Sciatic nerve (tissue), 2 donors: ENCODE measurements at regions of chr22 and their contacts with region 1.

Region 1: DNA sequence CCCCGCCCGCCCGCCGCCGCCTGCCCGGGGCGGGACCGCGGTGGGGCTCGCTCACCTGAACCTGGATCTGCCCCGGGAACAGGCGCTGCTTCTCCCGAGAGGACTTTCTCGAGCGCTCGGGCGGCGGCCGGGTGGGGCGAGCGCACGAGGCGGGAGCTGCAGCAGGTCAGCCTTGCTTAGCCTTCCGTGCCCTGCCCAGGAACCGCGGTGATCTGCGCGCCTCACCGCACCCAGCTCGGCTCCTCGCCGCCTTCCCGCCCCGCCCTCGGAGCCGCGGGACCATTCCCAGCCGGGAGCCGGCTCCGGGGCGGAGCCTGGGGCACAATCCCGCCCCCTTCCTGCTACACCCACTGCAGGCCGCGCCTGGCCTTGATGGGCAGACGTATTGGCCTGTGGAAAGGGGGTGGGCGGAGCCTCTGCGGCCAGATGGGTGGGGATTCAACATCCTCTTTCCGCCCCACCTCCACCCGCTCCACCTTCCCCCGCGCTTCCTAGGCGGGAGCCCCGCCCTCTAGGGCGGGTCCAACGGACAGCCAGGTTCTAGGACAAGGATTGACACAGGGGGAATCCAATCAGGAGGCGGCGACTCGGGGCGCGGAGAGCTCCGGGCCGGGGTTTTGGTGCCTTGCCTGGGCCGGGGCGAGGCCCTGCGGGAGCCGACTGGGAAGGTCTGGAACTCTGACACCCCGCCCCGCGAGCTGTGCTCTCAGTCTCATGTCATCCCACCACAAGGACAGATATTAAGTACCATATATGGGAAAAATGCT is at the start of gene MYH9:
- DNase-seq: peak; percentile 100
- ATAC-seq: peak; percentile 98
- total RNA-seq, gene MYH9: 973 TPM

Region 2: DNA sequence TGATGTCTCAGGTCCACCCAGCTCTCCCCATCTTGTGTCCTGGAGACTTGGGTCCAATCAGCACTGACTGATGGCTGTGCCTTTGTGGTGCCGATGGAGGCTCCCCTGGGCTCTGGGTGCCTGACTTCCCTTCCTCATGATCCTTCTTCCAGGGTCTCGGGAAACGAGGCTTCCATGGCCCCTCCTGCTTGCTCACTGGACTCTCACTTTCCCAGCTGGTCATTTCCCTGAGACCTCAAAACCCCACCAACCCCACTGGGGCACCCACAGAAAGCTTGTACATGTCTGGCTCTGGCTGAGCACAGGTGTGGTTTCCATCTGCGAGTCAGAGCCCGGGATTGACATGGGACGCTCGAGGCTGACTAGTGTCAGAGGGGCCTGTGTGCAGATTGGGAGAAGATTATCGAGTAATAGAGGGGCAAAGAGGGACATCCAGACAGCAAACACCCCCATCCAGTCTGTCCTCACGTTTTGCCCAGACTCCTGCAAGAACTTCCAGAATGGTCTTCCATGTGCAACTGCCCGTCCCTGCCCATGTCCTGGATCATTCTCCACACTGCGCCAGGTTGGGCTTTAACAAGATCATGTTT is 119.9 kb before region 1 on chr22:
- intact Hi-C with region 1: no loop called
- DNase-seq: no peak
- ATAC-seq: no peak

Region 3: DNA sequence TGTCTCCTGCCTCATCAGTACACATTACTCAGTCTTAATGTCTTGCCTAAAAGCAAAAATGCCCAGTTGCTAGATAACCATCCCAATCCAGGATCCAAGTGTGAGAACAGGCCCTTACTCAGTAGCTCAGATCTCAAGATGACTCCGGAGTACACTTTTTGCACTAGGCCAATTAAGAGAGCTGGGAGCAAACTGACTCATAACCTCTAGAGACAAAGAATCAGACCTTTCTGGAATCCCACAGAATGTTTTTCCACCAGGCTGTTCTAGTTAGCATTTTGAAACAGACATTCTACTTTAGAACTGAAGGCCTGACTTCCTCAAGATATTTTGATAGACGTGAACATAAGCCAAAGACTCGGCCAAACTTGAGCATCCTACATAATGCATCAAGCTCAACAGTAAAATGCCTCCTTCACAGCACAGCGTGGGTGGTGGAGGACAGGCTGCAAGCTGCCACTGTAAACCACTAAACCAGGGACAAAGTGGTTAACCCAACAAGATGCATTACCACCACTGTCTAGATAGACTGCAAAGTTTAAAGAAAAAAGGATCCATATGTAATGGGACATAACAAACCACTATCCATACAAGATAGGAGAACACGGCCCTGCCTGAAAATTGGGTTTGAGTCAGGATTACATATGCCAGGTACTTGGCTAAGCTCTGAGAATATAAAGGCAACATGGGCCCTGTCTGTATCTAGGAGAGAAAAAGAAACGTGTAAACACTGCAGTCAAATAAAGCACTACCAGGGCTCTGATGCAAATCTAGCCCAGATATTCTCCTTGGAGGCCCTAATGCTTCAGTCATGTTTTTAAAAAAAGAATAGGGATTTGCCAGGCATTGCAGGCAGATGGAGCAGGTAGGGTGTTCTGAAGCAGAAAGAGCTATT is 48.5 kb before region 1 on chr22:
- intact Hi-C with region 1: loop called (anchors 5 kb)
- DNase-seq: no peak
- ATAC-seq: peak; percentile 3

Region 4: GRCh38 chr22:36425977-36426523 is 38.1 kb after region 1 on chr22:
- intact Hi-C with region 1: loop called (anchors 1 kb)
- DNase-seq: no peak
- ATAC-seq: peak; percentile 58